ENCODE measurements at regions of chr17 and their contacts with region 1.

Region 1: GRCh38 chr17:73156166-73156840 is 8.5 kb upstream of the SSTR2 start:
- DNase-seq: peak in 1 of 2 donors; percentile 27
- ATAC-seq: peak; percentile 36 to 56
- H3K4me3 ChIP-seq: no peak overlapping the region
- H3K27ac ChIP-seq: peak overlapping the region in 1 of 4 donors; percentile 5
- H3K4me1 ChIP-seq: no peaks in the 10 kb centered on the region
- H3K27me3 ChIP-seq: peaks cover 2 to 6% (median 5%) of the 10 kb centered on the region in 3 donors
- CTCF ChIP-seq: peak; percentile 48 to 71 (median 60)
- POLR2A ChIP-seq: no peak

Region 2: GRCh38 chr17:72556944-72557826 is 599.1 kb before region 1 on chr17:
- in situ Hi-C with region 1: loop called in 1 of 4 experiments (anchors 25 kb)
- intact Hi-C with region 1: no loop called
- DNase-seq: peak in 1 of 2 donors; percentile 14
- ATAC-seq: no peak
- H3K4me3 ChIP-seq: no peak overlapping the region
- H3K27ac ChIP-seq: no peak overlapping the region
- H3K4me1 ChIP-seq: no peaks in the 10 kb centered on the region
- H3K27me3 ChIP-seq: no peaks in the 10 kb centered on the region
- CTCF ChIP-seq: peak in 4 of 5 experiments; percentile 33 to 62 (median 50)
- POLR2A ChIP-seq: no peak

Region 3: DNA sequence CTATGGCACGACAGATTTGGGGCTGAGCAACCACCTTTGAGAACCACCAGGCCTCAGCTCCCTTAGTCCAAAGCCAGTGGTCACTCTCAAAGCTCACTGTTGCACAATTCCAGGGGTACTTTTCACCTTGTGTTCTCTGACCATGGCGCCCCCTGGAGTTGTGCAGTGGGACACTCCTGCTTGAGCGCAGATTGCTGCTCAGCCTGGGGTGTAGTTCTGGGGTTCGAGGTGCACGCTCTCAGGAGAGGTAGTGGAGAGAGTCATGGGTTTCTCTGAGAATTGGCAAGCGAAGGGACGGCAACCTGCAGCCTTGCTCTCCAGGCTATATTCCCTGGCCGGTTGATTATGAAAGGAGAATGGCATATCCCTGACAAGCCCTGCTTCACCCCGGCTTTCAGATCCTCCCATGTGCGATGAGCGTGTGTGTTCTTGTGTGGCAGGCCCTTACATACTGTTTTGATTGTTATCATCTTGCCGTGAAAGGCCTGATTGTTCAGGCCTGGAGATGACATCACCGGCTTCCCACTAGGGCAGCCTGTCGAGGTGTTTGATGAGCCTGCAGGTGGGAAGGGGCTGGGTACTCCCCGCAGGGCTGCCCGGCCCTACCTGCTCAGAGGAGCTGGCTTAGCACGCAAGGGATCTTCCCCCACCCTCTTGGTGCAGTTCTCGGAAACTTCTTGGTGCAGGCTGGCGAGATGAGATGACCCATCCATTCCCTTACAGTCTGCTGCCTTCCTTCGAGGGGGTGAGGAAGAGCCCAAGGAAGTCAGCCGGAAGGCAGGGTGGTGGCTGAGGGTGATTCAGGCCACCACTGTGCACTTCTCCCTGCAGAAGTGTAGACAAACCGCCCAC is 495.0 kb before region 1 on chr17:
- in situ Hi-C with region 1: no loop called
- intact Hi-C with region 1: loop called (anchors 5 kb)
- DNase-seq: no peak
- ATAC-seq: no peak
- H3K4me3 ChIP-seq: no peak overlapping the region
- H3K27ac ChIP-seq: no peak overlapping the region
- H3K4me1 ChIP-seq: no peaks in the 10 kb centered on the region
- H3K27me3 ChIP-seq: no peaks in the 10 kb centered on the region
- CTCF ChIP-seq: no peak
- POLR2A ChIP-seq: no peak

Region 4: DNA sequence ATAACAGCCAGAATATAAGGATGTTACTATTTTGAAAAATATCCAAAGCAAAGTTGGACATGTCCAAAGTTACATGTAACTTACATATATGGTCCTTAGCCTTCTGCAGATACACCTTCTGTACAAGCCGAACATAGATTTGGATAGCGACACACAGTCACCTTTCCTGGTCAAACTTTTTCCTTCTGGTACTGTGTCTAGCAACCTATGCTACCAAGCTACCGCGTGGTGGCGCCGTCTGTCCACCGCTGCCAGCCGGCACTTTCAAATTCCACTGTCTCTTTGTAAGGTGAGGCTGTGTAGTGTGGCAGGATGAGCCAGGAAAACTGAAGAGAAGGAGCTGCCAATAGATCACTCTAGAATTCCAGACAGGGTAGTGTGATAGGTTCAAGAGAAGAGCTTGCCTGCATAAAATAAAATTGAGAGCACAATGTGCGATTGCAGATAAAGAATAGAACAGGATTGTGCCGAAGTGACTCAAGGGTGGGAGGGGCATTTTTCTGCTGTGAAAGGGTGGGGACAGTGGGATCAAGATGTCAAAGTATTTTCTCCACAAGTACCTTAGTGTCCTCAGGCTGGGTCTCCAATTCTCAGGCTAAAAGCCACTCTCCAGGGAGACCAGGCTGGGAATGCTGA is 430.8 kb before region 1 on chr17:
- in situ Hi-C with region 1: loop called (anchors 5 to 25 kb)
- intact Hi-C with region 1: loop called (anchors 1 kb)
- DNase-seq: no peak
- ATAC-seq: peak in 1 of 2 donors; percentile 30
- H3K4me3 ChIP-seq: no peak overlapping the region
- H3K27ac ChIP-seq: no peak overlapping the region
- H3K4me1 ChIP-seq: no peaks in the 10 kb centered on the region
- H3K27me3 ChIP-seq: no peaks in the 10 kb centered on the region
- CTCF ChIP-seq: peak; percentile 33 to 71 (median 55)
- POLR2A ChIP-seq: no peak

Region 5: GRCh38 chr17:72985881-72986720 is 170.2 kb before region 1 on chr17:
- in situ Hi-C with region 1: loop called in 1 of 4 experiments (anchors 5 kb)
- intact Hi-C with region 1: loop called (anchors 1 kb)
- DNase-seq: peak in 1 of 2 donors; percentile 33
- ATAC-seq: peak; percentile 74 to 86
- H3K4me3 ChIP-seq: no peak overlapping the region
- H3K27ac ChIP-seq: no peak overlapping the region
- H3K4me1 ChIP-seq: no peaks in the 10 kb centered on the region
- H3K27me3 ChIP-seq: no peaks in the 10 kb centered on the region
- CTCF ChIP-seq: peak; percentile 47 to 81 (median 68)
- POLR2A ChIP-seq: no peak

Region 6: DNA sequence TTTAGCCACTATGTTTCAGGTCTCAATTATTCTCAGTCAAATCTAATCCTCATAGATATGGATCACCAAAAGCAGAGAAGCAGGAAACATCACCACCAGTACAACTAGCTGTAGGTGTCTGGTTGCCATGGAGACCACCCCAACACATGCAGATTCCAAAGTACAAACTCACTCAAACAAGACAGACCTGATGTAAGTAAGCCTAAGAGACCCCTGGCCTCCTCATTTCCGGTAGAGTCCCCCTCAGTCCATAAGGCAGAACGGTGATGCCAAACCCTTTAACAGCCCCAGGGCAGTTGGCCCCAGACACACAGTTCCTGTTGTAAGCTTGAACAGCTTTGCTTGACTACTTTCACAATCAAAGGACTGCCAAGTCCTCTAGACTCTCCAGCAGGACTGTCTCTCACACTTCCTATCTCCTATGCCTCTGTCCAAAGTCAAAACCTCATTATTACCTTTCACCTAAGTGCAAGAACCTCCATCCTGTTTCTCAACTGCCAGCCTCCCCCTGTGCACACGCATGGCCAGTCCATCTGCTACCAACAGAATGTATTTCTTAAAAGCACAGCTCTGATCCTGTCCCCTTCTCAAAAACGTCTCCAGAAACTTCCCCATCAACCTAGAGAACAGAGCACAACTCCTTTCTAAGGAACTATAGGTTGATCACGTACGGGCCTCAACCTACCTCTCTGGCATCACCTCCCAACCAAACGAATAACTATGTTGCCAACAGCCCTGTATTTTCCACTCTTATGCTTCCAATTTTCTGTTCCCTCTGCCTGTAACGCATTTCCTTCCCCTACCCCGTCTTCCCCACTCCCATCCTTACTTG is 87.8 kb before region 1 on chr17:
- in situ Hi-C with region 1: no loop called
- intact Hi-C with region 1: no loop called
- DNase-seq: no peak
- ATAC-seq: no peak
- H3K4me3 ChIP-seq: no peak overlapping the region
- H3K27ac ChIP-seq: no peak overlapping the region
- H3K4me1 ChIP-seq: peaks cover 20 to 27% of the 10 kb centered on the region in 2 donors
- H3K27me3 ChIP-seq: no peaks in the 10 kb centered on the region
- CTCF ChIP-seq: no peak
- POLR2A ChIP-seq: no peak

Region 7: GRCh38 chr17:73625991-73626673 is 469.8 kb after region 1 on chr17:
- in situ Hi-C with region 1: no loop called
- intact Hi-C with region 1: no loop called
- DNase-seq: peak; percentile 44 to 52
- ATAC-seq: peak; percentile 74 to 87
- H3K4me3 ChIP-seq: no peak overlapping the region
- H3K27ac ChIP-seq: no peak overlapping the region
- H3K4me1 ChIP-seq: no peaks in the 10 kb centered on the region
- H3K27me3 ChIP-seq: no peaks in the 10 kb centered on the region
- CTCF ChIP-seq: no peak
- POLR2A ChIP-seq: no peak

Measured in gastrocnemius medialis (tissue), 4 donors.